Head of caudate nucleus (tissue), 42 donors: ENCODE measurements at regions of chr2 and their contacts with region 1.

Region 1: GRCh38 chr2:146124741-146125140 is 1604.8 kb upstream of the ZEB2 start:
- DNase-seq: no peak

Region 2: DNA sequence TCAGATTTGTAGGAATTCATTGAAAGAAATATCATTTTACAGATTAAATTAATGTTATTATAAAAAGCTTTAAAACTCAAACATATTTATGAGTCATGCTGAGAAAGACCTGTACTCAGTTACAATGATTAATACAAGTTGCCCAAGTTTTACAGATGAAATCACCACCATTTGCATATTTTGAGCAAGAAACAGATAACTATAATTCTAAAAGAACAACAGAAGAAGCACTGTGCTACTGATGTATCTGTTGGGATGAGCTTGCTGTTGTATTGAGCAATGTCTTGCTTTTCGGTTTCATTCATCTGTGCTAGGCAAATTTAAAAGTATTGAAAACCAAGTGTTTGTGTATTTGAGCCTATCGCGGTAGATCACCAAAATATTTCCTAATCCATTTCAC is 15.7 kb before region 1 on chr2:
- intact Hi-C with region 1: loop called (anchors 1 kb)
- DNase-seq: no peak